PC-9 (cell line): ENCODE measurements at regions of chr12 and their contacts with region 1.

Region 1: DNA sequence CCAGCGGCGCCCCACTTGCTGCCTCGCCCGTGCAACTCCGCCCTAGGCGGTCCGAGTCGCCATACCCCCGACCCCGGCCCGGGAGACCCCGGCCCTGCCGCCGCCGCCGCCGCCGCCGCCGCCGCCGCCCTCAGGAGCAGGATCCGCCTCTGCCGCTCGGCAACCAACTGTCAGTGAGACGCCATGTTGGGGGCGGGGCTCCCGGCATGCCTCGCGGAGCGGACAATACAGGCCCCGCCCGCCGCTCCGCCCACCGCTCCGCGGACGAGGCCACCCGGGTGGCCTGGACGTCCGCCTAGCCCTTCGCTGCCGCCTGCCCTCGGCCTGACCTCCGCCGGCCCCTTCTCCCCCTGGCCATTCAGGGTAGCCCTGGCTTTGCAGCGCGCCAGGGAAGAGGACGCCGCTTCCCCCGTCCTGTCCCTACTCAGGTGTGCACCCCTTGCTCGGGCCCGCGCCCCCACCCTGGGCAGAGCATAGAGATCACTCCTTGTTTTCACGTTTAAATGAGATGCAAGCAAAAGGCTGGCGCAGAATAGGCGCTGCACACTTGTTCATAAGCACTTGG is at the start of gene HECTD4:
- DNase-seq: peak; percentile 75 to 93
- H3K4me3 ChIP-seq: peak within 1 kb of the TSS; percentile 89
- H3K27ac ChIP-seq: no peak within 1 kb of the TSS
- H3K4me1 ChIP-seq: peaks cover 15% of the 10 kb centered on the region
- H3K27me3 ChIP-seq: no peaks in the 10 kb centered on the region
- CTCF ChIP-seq: no peak
- total RNA-seq, gene HECTD4: 37.4 and 39.8 TPM in 2 replicates

Region 2: DNA sequence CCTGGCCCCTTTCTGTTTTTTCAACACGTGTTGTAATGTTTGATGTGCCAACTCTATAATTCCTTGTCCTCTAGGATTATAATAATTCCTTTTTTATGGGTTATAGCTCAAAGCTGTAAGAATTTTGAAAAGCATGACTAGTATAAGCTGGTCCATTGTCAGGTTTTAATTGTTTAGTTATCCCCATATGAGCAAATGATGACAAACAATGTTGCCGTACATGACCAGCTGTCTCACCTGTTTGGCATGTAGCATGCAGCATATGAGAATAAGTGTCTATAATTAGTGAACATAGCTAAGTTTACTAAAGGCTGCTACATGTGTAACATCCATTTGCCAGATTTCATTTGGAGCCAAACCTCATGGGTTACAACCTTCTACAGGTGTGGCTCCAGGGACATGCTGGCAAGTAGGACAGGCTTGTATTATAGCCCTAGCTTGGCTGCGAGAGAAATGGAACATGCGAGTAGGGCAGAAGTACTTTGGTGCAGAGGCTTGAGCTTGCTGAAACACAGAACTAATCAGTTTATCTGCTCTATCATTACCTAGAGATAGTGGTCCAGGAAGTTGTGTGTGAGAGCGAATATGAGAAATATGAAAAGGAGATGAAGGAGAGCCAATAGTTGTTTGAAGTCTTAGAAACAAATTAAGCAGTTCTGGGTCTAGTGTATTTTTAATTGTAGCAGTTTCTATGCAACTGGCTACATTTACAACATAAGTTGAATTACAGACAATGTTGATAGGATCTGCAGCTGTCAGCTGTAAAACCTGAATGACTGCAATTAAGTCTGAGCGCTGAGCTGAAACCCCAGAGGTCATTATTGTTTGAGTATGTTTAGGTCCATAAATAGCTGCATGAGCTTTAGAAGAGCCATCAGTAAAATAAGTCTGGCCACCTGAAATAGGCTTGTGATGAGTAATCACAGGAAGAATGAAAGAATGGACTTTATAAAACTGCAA is 562.8 kb before region 1 on chr12:
- CTCF ChIA-PET with region 1: no interaction called
- POLR2A ChIA-PET with region 1: no interaction called
- intact Hi-C with region 1: loop called (anchors 10 kb)
- DNase-seq: peak; percentile 42 to 86
- H3K4me3 ChIP-seq: no peak overlapping the region
- H3K27ac ChIP-seq: 0 out of 2 replicates have a peak overlapping the region, but pooled peaks have one; percentile 23
- H3K4me1 ChIP-seq: peaks cover 23% of the 10 kb centered on the region
- H3K27me3 ChIP-seq: peaks cover 19% of the 10 kb centered on the region; the same call in 1 of the 2 replicates
- CTCF ChIP-seq: no peak

Region 3: DNA sequence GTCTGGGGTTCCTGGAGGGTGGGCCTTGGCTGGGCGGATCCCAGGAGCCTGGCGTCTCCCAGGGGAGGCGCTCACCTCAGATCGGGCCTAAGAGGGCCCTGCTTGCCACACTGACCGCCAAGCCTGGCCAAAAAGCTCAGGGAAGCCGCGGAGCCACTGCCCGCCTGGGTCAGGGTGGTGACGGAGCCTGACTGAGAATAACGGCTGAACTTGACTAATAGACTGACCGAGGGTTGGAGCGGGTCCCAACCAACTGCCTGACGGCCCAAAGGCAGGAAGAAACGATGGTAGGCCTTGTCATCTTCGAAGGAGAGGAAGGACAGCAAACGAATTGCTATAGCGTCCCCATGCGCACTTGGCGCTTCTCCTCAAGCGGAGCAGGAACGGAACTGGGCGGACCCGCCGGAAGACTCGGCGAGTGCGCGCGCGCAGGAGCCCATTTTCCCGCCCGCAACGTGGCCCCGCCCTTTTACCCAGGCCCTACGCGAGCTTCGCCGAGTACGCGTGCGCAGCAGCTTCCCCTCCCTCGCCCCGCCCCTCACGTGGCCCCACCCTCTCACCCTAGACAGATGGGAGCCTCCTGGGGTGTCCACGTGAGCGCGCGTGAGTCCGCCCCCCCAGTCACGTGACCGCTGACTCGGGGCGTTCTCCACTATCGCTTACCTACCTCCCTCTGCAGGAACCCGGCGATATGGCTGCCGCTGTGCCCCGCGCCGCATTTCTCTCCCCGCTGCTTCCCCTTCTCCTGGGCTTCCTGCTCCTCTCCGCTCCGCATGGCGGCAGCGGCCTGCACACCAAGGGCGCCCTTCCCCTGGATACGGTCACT is 369.3 kb before region 1 on chr12 and contains the starts of genes ERP29 and TMEM116:
- CTCF ChIA-PET with region 1: interaction called, 3 read pairs
- POLR2A ChIA-PET with region 1: no interaction called
- intact Hi-C with region 1: loop called (anchors 1 kb)
- DNase-seq: peak; percentile 91 to 98
- H3K4me3 ChIP-seq: peak within 1 kb of the TSS; percentile 86
- H3K27ac ChIP-seq: peak within 1 kb of the TSS; percentile 88
- H3K4me1 ChIP-seq: peaks cover 36% of the 10 kb centered on the region
- H3K27me3 ChIP-seq: no peaks in the 10 kb centered on the region
- CTCF ChIP-seq: peak; percentile 68
- total RNA-seq, gene ERP29: 131 and 154 TPM in 2 replicates
- total RNA-seq, gene TMEM116: 21.9 and 23.4 TPM in 2 replicates

Region 4: DNA sequence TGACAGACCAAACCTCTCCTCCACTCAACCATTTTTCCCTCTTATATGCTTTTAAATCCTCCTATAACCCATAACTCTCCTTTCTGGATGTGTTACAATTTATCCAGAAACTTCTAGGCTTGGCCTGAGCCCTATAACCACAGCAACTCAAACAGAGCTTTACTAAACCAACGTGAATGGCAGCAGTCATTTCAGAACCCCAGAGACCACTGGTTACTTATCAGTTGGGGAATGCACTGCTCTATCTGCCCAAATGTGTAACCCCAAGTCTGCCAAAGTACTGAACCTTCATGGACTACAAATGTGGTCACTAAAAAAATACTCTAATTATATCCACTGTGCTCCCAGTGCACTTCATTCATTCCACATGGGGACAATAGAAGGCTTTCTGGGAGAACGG is 315.7 kb before region 1 on chr12:
- CTCF ChIA-PET with region 1: no interaction called
- POLR2A ChIA-PET with region 1: no interaction called
- intact Hi-C with region 1: loop called (anchors 10 kb)
- DNase-seq: no peak
- H3K4me3 ChIP-seq: no peak overlapping the region
- H3K27ac ChIP-seq: no peak overlapping the region
- H3K4me1 ChIP-seq: no peaks in the 10 kb centered on the region
- H3K27me3 ChIP-seq: no peaks in the 10 kb centered on the region
- CTCF ChIP-seq: no peak

Region 5: GRCh38 chr12:112148031-112148513 is 234.2 kb before region 1 on chr12:
- CTCF ChIA-PET with region 1: interaction called, 13 read pairs
- POLR2A ChIA-PET with region 1: no interaction called
- intact Hi-C with region 1: no loop called
- DNase-seq: peak; percentile 67 to 80
- H3K4me3 ChIP-seq: no peak overlapping the region
- H3K27ac ChIP-seq: peak overlapping the region; percentile 72
- H3K4me1 ChIP-seq: peaks cover 37% of the 10 kb centered on the region
- H3K27me3 ChIP-seq: no peaks in the 10 kb centered on the region
- CTCF ChIP-seq: no peak

Region 6: DNA sequence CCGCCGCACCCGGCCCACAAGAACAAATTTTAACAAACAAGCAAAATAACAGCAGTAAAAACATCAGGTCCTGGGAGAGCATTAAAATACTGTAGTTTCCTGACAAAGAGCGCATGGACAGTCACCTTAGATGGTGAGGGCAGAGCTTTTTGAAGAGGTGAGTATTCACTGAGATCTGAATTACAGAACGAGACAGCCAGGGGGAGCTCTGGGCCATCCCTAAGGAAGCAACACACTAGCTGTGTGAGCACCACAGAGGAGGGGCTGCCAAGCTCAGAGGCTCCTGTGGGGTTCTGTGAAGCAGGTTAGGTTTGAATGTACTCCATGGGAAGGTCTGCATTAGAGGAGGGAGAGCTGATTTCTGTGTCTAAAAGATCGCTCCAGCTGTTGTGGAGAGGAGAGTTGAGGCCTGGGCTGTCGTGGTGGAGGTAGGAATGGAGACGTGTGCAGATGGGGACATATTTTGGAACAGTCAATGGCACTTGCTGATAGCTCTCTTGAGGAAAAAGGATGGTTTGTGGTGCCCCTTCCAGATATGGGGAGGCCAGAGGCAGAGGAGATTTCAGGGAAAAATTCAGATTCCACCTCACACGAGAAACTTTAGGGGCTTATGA is 184.1 kb before region 1 on chr12:
- CTCF ChIA-PET with region 1: interaction called, 10 read pairs
- POLR2A ChIA-PET with region 1: no interaction called
- intact Hi-C with region 1: no loop called
- DNase-seq: peak; percentile 31 to 42
- H3K4me3 ChIP-seq: no peak overlapping the region
- H3K27ac ChIP-seq: no peak overlapping the region
- H3K4me1 ChIP-seq: no peaks in the 10 kb centered on the region
- H3K27me3 ChIP-seq: no peaks in the 10 kb centered on the region
- CTCF ChIP-seq: peak; percentile 79

Region 7: DNA sequence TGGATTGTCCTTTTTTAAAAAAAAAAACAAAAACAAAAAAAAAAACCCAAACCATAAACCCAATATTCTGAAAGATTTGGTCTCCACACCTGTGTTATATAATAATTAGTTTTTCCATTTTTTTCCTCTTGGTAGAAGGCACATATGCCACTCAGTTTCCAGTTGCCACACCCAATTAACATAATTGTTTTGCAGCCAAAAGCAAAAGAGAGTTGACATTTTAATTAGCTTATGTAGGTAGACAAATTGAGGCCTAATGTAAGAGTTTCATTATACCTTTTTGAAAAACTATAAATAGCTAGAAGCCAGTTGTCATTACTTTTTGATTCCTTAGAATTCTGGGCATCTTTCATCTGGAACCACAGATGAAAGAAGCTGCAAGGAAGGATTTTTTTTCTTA is 57.5 kb after region 1 on chr12:
- CTCF ChIA-PET with region 1: no interaction called
- POLR2A ChIA-PET with region 1: no interaction called
- intact Hi-C with region 1: no loop called
- DNase-seq: no peak
- H3K4me3 ChIP-seq: no peak overlapping the region
- H3K27ac ChIP-seq: no peak overlapping the region
- H3K4me1 ChIP-seq: no peaks in the 10 kb centered on the region
- H3K27me3 ChIP-seq: no peaks in the 10 kb centered on the region
- CTCF ChIP-seq: no peak